OCI-LY7 (cell line): ENCODE measurements at regions of chr1 and their contacts with region 1.

Region 1: GRCh38 chr1:79353224-79353623 is 346.7 kb upstream of the ADGRL4 start:
- DNase-seq: peak; percentile 20
- H3K4me3 ChIP-seq: no peak overlapping the region
- H3K27ac ChIP-seq: no peak overlapping the region
- H3K4me1 ChIP-seq: no peaks in the 10 kb centered on the region
- CTCF ChIP-seq: peak; percentile 78

Region 2: DNA sequence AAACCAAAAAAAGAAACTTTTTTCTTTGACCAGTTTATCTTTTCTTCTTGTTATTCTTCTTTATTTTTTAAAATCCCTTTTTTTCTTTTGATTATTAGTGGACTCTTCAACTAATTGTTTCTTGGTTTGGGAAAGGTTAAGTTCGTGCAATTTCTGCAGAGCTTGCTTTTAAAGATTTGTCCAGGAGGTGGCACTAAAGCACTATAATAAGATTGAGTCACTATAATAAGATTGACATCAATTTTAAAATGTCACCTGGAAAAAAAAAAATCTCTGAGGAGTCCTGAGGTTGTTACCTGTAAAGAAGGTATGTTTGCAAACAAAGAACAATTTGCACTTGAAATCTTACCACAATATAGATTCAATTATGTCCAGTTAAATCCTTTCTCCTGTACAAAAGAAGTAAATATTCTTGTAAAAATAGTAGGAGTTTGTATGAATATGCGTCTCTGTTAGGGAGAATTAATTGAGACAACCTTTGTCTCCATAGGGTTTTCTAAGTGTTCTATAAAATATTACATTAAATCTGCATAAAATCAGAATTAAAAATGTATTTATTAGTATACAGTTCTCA is 513.4 kb before region 1 on chr1:
- CTCF ChIA-PET with region 1: no interaction called
- POLR2A ChIA-PET with region 1: no interaction called
- intact Hi-C with region 1: loop called (anchors 5 kb)
- DNase-seq: peak; percentile 52
- H3K4me3 ChIP-seq: no peak overlapping the region
- H3K27ac ChIP-seq: no peak overlapping the region
- H3K4me1 ChIP-seq: no peaks in the 10 kb centered on the region
- CTCF ChIP-seq: peak; percentile 90

Region 3: GRCh38 chr1:79069828-79070227 is 283.4 kb before region 1 on chr1:
- CTCF ChIA-PET with region 1: no interaction called
- POLR2A ChIA-PET with region 1: no interaction called
- intact Hi-C with region 1: no loop called
- DNase-seq: no peak
- H3K4me3 ChIP-seq: no peak overlapping the region
- H3K27ac ChIP-seq: no peak overlapping the region
- H3K4me1 ChIP-seq: no peaks in the 10 kb centered on the region
- CTCF ChIP-seq: peak; percentile 15; the same call in 1 of the 2 replicates

Region 4: GRCh38 chr1:79150576-79150975 is 202.6 kb before region 1 on chr1:
- CTCF ChIA-PET with region 1: no interaction called
- POLR2A ChIA-PET with region 1: no interaction called
- intact Hi-C with region 1: no loop called
- DNase-seq: no peak
- H3K4me3 ChIP-seq: no peak overlapping the region
- H3K27ac ChIP-seq: no peak overlapping the region
- H3K4me1 ChIP-seq: no peaks in the 10 kb centered on the region
- CTCF ChIP-seq: no peak